CD4-positive, alpha-beta T cell (primary cell): ENCODE measurements at regions of chr5 and their contacts with region 1.

Region 1: GRCh38 chr5:151150471-151151262 is 6.9 kb downstream of the ANXA6 start:
- DNase-seq: peak; percentile 53 to 88 (median 75)
- ATAC-seq: peak; percentile 83
- H3K4me3 ChIP-seq: peak overlapping the region; percentile 22
- H3K4me3 Mint-ChIP-seq: peak overlapping the region; percentile 58
- H3K27ac ChIP-seq: peak overlapping the region; percentile 89 to 91
- H3K27ac Mint-ChIP-seq: peak overlapping the region; percentile 91
- H3K4me1 ChIP-seq: peaks cover 100% of the 10 kb centered on the region
- H3K4me1 Mint-ChIP-seq: peaks cover 98% of the 10 kb centered on the region
- H3K27me3 ChIP-seq: no peaks in the 10 kb centered on the region
- H3K27me3 Mint-ChIP-seq: no peaks in the 10 kb centered on the region
- CTCF ChIP-seq: no peak

Region 2: GRCh38 chr5:151126199-151126645 is 24.4 kb before region 1 on chr5:
- CTCF ChIA-PET with region 1: interaction called, 34 read pairs
- POLR2A ChIA-PET with region 1: interaction called, 41 read pairs
- intact Hi-C with region 1: no loop called
- DNase-seq: peak; percentile 42 to 84 (median 62)
- ATAC-seq: peak; percentile 61
- H3K4me3 ChIP-seq: no peak overlapping the region
- H3K4me3 Mint-ChIP-seq: no peak overlapping the region
- H3K27ac ChIP-seq: peak overlapping the region in 1 of 2 donors; percentile 50
- H3K27ac Mint-ChIP-seq: peak overlapping the region; percentile 91
- H3K4me1 ChIP-seq: peaks cover 53% of the 10 kb centered on the region
- H3K4me1 Mint-ChIP-seq: peaks cover 71% of the 10 kb centered on the region
- H3K27me3 ChIP-seq: no peaks in the 10 kb centered on the region
- H3K27me3 Mint-ChIP-seq: no peaks in the 10 kb centered on the region
- CTCF ChIP-seq: peak; percentile 90

Region 3: DNA sequence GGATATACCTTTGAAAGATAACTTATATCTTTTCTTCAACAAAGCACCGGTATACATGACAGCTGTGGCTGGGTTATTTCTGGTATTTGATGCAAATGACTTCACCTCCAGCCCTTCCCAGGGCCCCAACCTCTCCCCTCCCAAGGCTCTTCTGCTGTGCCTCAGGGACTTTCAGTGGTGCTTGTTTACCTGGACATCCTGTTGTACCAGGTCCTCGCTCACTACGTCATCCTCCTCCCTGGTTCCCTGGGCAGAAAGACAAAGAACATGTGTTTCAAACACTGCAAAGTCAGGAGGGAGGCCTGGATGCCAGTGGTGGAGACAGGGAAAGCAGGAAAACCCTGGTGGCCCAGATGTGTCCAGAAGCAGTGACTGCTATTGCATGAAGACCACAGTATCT is 16.4 kb before region 1 on chr5:
- CTCF ChIA-PET with region 1: interaction called, 6 read pairs
- POLR2A ChIA-PET with region 1: interaction called, 71 read pairs
- intact Hi-C with region 1: no loop called
- DNase-seq: no peak
- ATAC-seq: no peak
- H3K4me3 ChIP-seq: no peak overlapping the region
- H3K4me3 Mint-ChIP-seq: no peak overlapping the region
- H3K27ac ChIP-seq: peak overlapping the region; percentile 47 to 51
- H3K27ac Mint-ChIP-seq: peak overlapping the region; percentile 91
- H3K4me1 ChIP-seq: peaks cover 62% of the 10 kb centered on the region
- H3K4me1 Mint-ChIP-seq: peaks cover 93% of the 10 kb centered on the region
- H3K27me3 ChIP-seq: no peaks in the 10 kb centered on the region
- H3K27me3 Mint-ChIP-seq: no peaks in the 10 kb centered on the region
- CTCF ChIP-seq: no peak

Region 4: DNA sequence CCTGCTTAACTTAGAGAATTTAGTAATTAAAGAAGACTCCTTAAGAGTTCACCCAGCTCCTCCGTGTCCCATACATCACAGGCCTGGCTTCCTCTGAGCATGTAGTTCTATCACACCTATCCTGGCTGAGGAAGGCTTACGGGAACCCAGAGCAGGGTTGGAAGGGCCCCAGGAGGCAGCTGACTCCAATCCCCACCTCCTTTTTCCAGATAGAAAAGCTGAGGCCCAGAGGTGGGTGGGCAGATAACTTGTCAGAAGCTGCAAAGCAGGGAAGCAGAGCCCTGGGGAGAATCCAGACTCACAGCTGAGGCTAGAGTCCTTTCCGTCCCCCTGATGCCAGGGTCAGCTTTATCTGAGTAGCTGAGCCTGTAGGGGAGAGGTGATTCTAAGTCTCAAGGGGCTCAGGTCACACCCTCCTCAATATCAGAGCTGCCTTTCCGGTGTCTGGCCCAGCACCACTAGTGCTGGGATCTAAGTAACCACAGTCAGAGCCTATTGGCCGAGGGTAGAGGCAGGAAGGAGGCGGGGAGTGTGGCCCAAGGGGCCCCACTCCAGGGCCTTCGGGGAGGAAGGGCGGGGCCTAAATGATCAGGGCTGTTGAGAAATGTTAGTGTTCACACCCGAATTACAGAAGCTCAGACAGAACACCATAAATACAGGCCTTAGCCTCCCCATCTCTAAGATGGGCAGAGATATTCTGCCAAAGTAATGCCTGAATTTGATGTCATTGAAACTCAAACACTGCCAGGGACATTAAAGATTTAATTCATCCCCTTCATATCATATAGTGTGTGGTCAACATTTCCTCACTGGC is 63.3 kb after region 1 on chr5:
- CTCF ChIA-PET with region 1: interaction called, 3 read pairs
- POLR2A ChIA-PET with region 1: interaction called, 13 read pairs
- intact Hi-C with region 1: loop called in 1 of 2 experiments (anchors 5 kb)
- DNase-seq: peak; percentile 66 to 94 (median 86)
- ATAC-seq: peak; percentile 81
- H3K4me3 ChIP-seq: peak overlapping the region; percentile 55
- H3K4me3 Mint-ChIP-seq: peak overlapping the region; percentile 89
- H3K27ac ChIP-seq: peak overlapping the region; percentile 92 to 97
- H3K27ac Mint-ChIP-seq: peak overlapping the region; percentile 94
- H3K4me1 ChIP-seq: peaks cover 99% of the 10 kb centered on the region
- H3K4me1 Mint-ChIP-seq: peaks cover 94% of the 10 kb centered on the region
- H3K27me3 ChIP-seq: no peaks in the 10 kb centered on the region
- H3K27me3 Mint-ChIP-seq: no peaks in the 10 kb centered on the region
- CTCF ChIP-seq: no peak